Mammary epithelial cell (primary cell): ENCODE measurements at regions of chr3 and their contacts with region 1.

Region 1: DNA sequence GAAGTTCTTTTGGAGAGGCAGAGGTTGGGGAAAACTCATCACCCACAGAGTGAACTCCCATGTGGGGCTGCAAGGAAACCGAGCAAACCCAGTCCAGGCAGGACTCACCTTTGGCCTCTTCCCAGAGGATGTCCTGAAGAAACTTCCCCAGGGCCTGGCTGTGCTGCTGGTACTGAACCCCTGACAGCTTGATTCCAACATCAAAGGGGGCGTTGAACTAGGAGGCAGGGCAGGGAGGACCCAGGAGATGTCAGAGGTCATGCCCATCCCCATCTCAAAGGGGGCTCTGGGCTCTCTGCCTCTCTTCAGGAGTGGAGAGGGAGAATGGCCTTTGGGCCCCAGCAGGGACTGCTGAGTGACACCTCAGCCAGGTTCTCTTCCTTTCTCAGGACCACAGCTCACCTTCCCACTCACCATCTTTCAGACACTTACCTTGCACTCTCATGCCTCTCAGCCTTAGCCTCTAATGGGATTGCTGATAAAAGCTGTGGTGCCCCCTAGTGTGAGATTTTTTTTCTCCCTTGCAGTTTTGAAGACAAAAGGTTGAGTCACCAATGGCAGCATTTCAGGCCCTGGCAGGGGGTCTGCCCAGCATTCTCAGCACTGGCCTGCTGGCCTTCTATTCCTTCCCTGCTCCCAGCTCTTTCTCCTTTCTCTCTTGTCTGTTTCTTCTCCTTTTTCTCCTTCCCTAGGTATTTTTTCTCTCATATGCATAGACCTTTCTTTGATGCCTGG is 6.0 kb downstream of the GHRL start:
- DNase-seq: peak; percentile 39
- H3K4me3 ChIP-seq: no peak overlapping the region
- H3K27ac ChIP-seq: no peak overlapping the region
- H3K4me1 ChIP-seq: no peaks in the 10 kb centered on the region
- H3K27me3 ChIP-seq: no peaks in the 10 kb centered on the region
- CTCF ChIP-seq: no peak

Region 2: GRCh38 chr3:9826815-9827567 is 459.8 kb before region 1 on chr3:
- CTCF ChIA-PET with region 1: no interaction called
- dilution Hi-C with region 1: no loop called
- in situ Hi-C with region 1: no loop called
- intact Hi-C with region 1: loop called (anchors 10 kb)
- DNase-seq: no peak
- H3K4me3 ChIP-seq: no peak overlapping the region
- H3K27ac ChIP-seq: no peak overlapping the region
- H3K4me1 ChIP-seq: no peaks in the 10 kb centered on the region
- H3K27me3 ChIP-seq: no peaks in the 10 kb centered on the region
- CTCF ChIP-seq: peak; percentile 25 to 27

Region 3: GRCh38 chr3:10041034-10041433 is 245.7 kb before region 1 on chr3:
- CTCF ChIA-PET with region 1: no interaction called
- dilution Hi-C with region 1: no loop called
- in situ Hi-C with region 1: no loop called
- intact Hi-C with region 1: no loop called
- DNase-seq: no peak
- H3K4me3 ChIP-seq: no peak overlapping the region
- H3K27ac ChIP-seq: no peak overlapping the region
- H3K4me1 ChIP-seq: no peaks in the 10 kb centered on the region
- H3K27me3 ChIP-seq: no peaks in the 10 kb centered on the region
- CTCF ChIP-seq: no peak

Region 4: GRCh38 chr3:10228248-10228950 is 58.4 kb before region 1 on chr3:
- CTCF ChIA-PET with region 1: no interaction called
- dilution Hi-C with region 1: no loop called
- in situ Hi-C with region 1: no loop called
- intact Hi-C with region 1: no loop called
- DNase-seq: peak; percentile 79
- H3K4me3 ChIP-seq: no peak overlapping the region
- H3K27ac ChIP-seq: no peak overlapping the region
- H3K4me1 ChIP-seq: peaks cover 4% of the 10 kb centered on the region
- H3K27me3 ChIP-seq: no peaks in the 10 kb centered on the region
- CTCF ChIP-seq: no peak

Region 5: DNA sequence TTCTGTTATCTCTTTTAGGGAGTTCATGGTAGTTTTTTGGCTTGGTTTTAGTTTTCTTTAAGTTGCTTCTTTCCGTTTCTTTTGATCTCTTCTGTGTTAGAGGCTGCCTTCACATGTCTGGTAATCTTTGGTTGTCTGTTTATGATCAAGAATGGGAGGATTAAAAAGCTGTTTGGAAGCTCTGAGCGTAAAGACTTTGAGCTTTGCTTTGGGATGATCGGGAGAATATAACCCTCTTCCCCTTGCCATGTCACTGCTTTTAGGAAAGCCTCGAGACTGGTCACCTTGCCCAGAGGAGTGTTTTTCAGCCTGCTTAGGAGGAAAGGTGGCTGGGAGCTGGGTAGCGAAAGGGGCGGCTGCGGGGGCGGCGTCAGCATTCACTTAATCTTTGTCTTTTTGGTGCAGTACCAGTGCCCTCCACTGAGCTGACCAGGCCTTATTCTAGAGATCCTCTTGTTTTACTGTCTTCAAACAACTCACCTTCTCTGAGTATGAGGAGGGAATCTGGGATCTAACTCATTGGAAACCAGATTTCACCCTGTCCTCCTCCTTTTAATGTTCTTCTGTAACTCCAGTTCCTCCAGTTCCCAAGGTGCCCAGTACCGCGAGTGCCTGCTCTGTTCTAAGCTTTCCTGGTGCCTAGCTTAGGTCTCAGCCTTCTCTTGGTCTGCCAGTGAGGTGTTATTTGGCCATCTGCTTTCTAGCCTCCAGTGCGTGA is 23.0 kb before region 1 on chr3:
- CTCF ChIA-PET with region 1: no interaction called
- dilution Hi-C with region 1: no loop called
- in situ Hi-C with region 1: no loop called
- intact Hi-C with region 1: no loop called
- DNase-seq: peak; percentile 18
- H3K4me3 ChIP-seq: no peak overlapping the region
- H3K27ac ChIP-seq: no peak overlapping the region
- H3K4me1 ChIP-seq: no peaks in the 10 kb centered on the region
- H3K27me3 ChIP-seq: no peaks in the 10 kb centered on the region
- CTCF ChIP-seq: peak; percentile 38 to 51